ENCODE measurements at regions of chr17 and their contacts with region 1.

Region 1: DNA sequence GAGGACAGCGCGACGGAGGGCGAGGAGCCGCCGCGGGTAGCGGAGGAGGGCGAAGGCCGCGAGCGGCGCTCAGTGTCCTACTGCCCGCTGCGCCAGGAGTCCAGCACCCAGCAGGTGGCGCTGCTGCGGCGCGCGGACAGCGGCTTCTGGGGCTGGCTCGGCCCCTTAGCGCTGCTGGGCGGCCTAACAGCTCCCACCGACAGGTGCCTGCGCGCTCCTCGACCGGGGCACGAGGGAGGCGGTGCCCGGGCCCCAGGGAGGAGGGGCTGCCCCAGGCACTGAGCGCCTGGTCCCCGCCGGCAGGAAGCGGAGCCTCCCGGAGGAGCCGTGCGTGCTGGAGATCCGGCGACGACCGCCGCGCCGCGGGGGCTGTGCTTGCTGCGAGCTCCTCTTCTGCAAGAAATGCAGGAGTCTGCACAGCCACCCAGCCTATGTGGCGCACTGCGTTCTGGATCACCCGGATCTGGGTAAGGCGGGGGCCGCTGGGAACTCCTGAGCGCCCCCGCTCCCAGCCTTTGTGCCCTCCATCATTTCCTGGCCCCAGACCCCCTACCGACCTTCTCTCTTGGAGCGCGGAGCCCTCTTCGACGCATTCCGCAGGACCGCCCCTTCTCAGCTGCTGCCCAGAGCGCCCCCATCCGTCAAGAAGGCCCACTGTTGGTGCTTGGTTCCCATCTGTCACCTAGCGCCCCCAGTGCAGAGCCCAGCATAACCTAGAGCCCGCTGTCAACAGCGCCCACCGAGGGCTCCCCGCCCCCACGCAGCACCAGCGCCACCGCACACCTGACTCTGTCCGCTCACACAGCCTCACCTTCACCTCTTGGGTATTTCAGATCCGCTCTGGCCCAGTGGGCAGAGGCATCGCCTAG is 3.7 kb downstream of the C17orf50 start:
- DNase-seq: peak; percentile 89
- H3K4me3 ChIP-seq: peak overlapping the region; percentile 55
- H3K27ac ChIP-seq: peak overlapping the region; percentile 20
- H3K4me1 ChIP-seq: peaks cover 6% of the 10 kb centered on the region
- H3K27me3 ChIP-seq: no peaks in the 10 kb centered on the region
- CTCF ChIP-seq: peak; percentile 93

Region 2: DNA sequence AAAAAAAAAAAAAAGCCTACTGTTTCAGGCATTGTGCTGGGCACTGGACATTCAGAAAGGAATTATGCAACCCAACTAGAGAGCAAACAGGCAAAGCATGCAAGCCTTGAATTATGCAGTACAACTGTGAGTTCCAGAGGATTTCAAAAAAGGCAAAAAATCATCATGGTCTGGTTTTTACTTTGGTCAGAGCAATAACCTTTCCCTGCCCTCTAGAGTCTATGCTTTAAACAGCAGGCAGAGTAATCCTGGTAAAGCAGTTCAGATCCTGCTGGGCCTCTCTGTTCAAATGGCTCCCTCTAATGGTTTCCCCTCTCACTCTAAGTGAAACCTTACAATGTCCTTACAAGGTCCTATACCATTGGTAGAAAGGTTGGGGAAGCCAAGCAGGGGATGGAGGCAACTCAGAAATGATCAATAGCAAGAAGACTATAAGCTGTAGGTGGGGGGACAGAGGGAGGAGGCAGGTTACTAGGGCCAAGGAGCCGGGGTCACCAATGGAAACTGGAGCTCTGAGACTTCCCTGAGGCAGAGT is 40.4 kb after region 1 on chr17:
- intact Hi-C with region 1: loop called (anchors 1 kb)
- DNase-seq: peak; percentile 67
- H3K4me3 ChIP-seq: no peak overlapping the region
- H3K27ac ChIP-seq: no peak overlapping the region
- H3K4me1 ChIP-seq: peaks cover 19% of the 10 kb centered on the region
- H3K27me3 ChIP-seq: no peaks in the 10 kb centered on the region
- CTCF ChIP-seq: peak; percentile 86

Measured in colonic mucosa (tissue), 4 donors.